Endothelial cell of umbilical vein (primary cell): ENCODE measurements at regions of chr3 and their contacts with region 1.

Region 1: DNA sequence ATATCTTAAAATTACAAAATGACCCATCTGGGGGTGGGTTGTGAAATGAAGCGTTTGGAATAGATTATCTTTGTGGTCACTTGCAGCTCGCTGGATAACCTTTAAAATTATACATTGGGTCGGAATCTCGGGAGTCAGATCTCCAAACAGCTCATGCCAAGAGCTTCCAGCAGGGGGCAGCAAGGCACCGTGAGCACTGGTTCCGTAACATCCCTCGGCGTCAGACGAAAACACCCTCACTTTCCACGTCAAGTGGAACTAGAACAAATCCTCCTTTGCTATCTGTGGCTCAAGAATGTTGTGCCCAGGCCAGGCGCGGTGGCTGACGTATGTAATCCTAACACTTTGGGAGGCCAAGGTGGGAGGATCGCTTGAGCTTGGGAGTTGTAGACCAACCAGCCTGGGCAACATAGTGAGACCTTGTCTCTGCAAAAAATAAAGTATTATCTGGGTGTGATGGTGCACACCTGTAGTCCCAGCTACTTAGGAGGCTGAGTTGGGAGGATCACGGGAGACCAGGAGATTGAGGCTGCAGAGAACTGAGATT is 31.1 kb downstream of the UMPS start:
- DNase-seq: peak; percentile 75
- H3K4me3 ChIP-seq: no peak overlapping the region
- H3K27ac ChIP-seq: no peak overlapping the region
- H3K4me1 ChIP-seq: no peaks in the 10 kb centered on the region
- H3K27me3 ChIP-seq: no peaks in the 10 kb centered on the region
- CTCF ChIP-seq: peak; percentile 88 to 92
- POLR2A ChIP-seq: no peak

Region 2: DNA sequence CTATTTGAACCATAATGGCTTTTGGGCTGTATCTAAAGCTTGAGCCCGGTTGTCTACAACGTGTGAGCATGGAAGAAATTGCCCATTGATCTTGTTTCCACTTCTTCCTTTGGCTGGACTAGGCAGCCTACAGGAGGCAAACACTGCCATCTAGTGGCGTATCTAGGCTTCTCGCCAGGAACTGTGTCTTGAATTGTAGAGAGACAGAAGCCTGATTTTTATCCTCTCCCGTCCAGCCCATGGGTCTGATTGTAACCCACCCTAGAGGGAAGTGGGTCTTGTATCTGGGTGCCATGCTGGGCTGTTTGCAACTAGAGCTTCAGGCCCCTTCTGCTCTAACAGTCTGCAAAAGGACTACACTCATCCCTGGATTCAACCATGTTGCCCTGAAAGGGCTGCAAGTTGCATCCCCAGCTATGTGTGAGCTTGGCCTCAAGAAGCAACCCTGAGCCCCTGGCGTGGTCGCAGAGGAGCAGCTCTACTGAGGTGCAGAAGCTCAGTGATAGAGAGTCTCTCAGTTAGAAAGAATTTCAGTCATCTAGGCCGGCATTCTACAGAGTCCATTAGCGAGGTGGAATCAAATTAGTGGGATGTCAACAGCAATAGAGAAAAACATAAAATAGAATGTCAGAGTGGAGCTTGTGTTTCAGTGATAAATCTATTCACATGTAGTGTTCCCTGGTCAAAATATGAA is 201.3 kb before region 1 on chr3:
- CTCF ChIA-PET with region 1: interaction called, 16 read pairs
- POLR2A ChIA-PET with region 1: no interaction called
- dilution Hi-C with region 1: no loop called
- intact Hi-C with region 1: loop called (anchors 1 kb)
- DNase-seq: peak; percentile 78
- H3K4me3 ChIP-seq: no peak overlapping the region
- H3K27ac ChIP-seq: no peak overlapping the region
- H3K4me1 ChIP-seq: peaks cover 29% of the 10 kb centered on the region
- H3K27me3 ChIP-seq: peaks cover 0 to 10% of the 10 kb centered on the region in 2 experiments
- CTCF ChIP-seq: peak; percentile 81 to 89
- POLR2A ChIP-seq: no peak

Region 3: DNA sequence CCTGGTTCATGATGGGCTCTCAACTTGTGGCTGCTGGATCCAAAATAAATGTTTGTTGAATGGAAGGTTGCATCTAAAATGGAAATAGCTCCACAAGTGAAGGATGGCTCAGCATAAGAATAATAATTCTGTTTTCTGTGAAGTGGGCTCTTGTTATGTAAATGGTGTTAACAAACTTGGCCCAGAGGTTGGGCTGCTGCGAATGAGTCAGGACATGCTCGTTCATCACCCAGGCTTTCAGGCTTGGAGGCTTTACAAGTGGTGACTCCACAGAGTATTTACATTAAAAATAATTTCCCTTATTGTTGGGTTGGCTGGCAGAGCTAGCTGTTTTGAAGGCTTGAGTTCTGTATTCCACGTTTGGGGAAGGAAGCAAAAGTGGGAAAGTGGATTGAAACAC is 65.4 kb after region 1 on chr3:
- CTCF ChIA-PET with region 1: interaction called, 14 read pairs
- POLR2A ChIA-PET with region 1: no interaction called
- dilution Hi-C with region 1: no loop called
- intact Hi-C with region 1: no loop called
- DNase-seq: peak; percentile 74
- H3K4me3 ChIP-seq: no peak overlapping the region
- H3K27ac ChIP-seq: no peak overlapping the region
- H3K4me1 ChIP-seq: peaks cover 3% of the 10 kb centered on the region
- H3K27me3 ChIP-seq: no peaks in the 10 kb centered on the region
- CTCF ChIP-seq: no peak
- POLR2A ChIP-seq: no peak

Region 4: DNA sequence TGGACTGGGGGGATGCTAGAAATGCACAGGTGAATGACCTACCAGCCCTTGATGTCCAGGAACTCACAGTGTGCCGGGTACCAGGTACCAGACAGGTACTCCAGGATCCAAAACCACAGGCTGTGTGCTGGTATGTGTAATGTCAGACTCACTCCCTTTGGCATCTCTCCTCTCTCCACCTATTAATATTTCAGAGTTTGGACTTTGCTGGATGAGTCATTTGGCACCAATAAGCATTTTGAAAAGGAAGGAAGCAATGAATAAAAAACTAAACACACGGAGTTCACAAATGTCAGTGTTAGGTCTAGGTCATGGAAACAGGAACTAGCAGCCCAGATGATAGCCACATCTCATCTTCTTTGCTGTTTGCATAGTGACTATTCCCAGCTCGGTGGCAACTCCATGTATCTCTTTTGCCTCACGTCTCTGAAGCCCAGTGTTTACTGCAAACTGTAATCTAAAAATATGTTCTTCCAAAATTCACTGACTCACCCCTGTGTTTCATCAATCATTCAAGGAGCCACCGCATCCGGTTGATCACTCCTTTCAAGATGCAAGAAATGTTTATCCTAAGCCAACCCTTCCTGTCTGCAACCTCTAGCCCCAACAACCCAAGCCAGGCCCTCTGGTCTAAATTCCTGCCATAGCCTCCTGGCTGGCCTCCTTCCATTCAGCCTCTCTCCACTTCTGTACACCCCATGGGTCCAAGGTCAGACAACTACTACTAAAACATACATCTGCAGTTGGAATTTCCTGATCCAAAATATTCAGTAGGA is 117.4 kb after region 1 on chr3:
- CTCF ChIA-PET with region 1: interaction called, 20 read pairs
- POLR2A ChIA-PET with region 1: no interaction called
- dilution Hi-C with region 1: loop called (anchors 25 kb)
- intact Hi-C with region 1: no loop called
- DNase-seq: peak; percentile 94
- H3K4me3 ChIP-seq: no peak overlapping the region
- H3K27ac ChIP-seq: peak overlapping the region; percentile 91
- H3K4me1 ChIP-seq: peaks cover 34% of the 10 kb centered on the region
- H3K27me3 ChIP-seq: no peaks in the 10 kb centered on the region
- CTCF ChIP-seq: no peak
- POLR2A ChIP-seq: peak; percentile 57

Region 5: GRCh38 chr3:124905849-124906248 is 144.5 kb after region 1 on chr3:
- CTCF ChIA-PET with region 1: interaction called, 424 read pairs
- POLR2A ChIA-PET with region 1: interaction called, 5 read pairs
- dilution Hi-C with region 1: no loop called
- intact Hi-C with region 1: loop called (anchors 1 kb)
- DNase-seq: no peak
- H3K4me3 ChIP-seq: no peak overlapping the region
- H3K27ac ChIP-seq: no peak overlapping the region
- H3K4me1 ChIP-seq: no peaks in the 10 kb centered on the region
- H3K27me3 ChIP-seq: peaks cover 26 to 27% of the 10 kb centered on the region in 2 experiments
- CTCF ChIP-seq: no peak
- POLR2A ChIP-seq: no peak

Region 6: GRCh38 chr3:125150525-125151441 is 389.5 kb after region 1 on chr3:
- CTCF ChIA-PET with region 1: no interaction called
- POLR2A ChIA-PET with region 1: no interaction called
- dilution Hi-C with region 1: no loop called
- intact Hi-C with region 1: loop called (anchors 10 kb)
- DNase-seq: peak; percentile 48
- H3K4me3 ChIP-seq: no peak overlapping the region
- H3K27ac ChIP-seq: no peak overlapping the region
- H3K4me1 ChIP-seq: peaks cover 7% of the 10 kb centered on the region
- H3K27me3 ChIP-seq: no peaks in the 10 kb centered on the region
- CTCF ChIP-seq: peak; percentile 37 to 69
- POLR2A ChIP-seq: no peak